H1 (cell line): ENCODE measurements at regions of chr2 and their contacts with region 1.

Region 1: GRCh38 chr2:211437396-211437795 is 881.0 kb downstream of the CPS1 start:
- DNase-seq: no peak
- H3K4me3 ChIP-seq: no peak overlapping the region
- H3K27ac ChIP-seq: no peak overlapping the region
- H3K4me1 ChIP-seq: peaks cover 0 to 4% (median 0%) of the 10 kb centered on the region in 4 experiments; a peak in 1 of 7 replicates
- H3K27me3 ChIP-seq: no peaks in the 10 kb centered on the region
- CTCF ChIP-seq: no peak
- EP300 ChIP-seq: no peak
- POLR2A ChIP-seq: no peak
- RAD21 ChIP-seq: no peak

Region 2: GRCh38 chr2:211376410-211376809 is 61.0 kb before region 1 on chr2:
- CTCF ChIA-PET with region 1: no interaction called
- POLR2A ChIA-PET with region 1: no interaction called
- DNase-seq: no peak
- H3K4me3 ChIP-seq: no peak overlapping the region
- H3K27ac ChIP-seq: no peak overlapping the region
- H3K4me1 ChIP-seq: no peaks in the 10 kb centered on the region
- H3K27me3 ChIP-seq: no peaks in the 10 kb centered on the region
- CTCF ChIP-seq: no peak
- EP300 ChIP-seq: no peak
- POLR2A ChIP-seq: no peak
- RAD21 ChIP-seq: no peak

Region 3: GRCh38 chr2:211416373-211416772 is 21.0 kb before region 1 on chr2:
- CTCF ChIA-PET with region 1: no interaction called
- POLR2A ChIA-PET with region 1: no interaction called
- DNase-seq: no peak
- H3K4me3 ChIP-seq: no peak overlapping the region
- H3K27ac ChIP-seq: no peak overlapping the region
- H3K4me1 ChIP-seq: no peaks in the 10 kb centered on the region
- H3K27me3 ChIP-seq: no peaks in the 10 kb centered on the region
- CTCF ChIP-seq: no peak
- EP300 ChIP-seq: no peak
- POLR2A ChIP-seq: no peak
- RAD21 ChIP-seq: no peak

Region 4: DNA sequence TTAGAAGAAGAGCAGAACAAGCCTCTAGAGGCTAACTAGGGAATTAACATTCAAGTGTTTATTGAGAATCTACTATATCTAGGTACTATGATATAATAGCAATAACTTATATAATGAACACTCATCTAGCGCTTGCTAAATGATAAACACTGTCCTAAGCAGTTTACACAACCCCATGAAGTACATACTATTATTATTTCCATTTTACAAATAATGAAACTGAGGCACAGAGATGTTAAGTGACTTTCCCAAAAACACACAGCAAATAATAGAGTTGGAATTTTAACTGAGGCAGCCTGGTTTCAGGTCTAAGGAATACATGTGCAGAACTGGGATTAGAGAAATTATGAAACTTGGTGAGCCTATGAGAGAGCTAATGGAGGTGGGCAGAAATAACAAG is 12.4 kb after region 1 on chr2:
- CTCF ChIA-PET with region 1: interaction called, 18 read pairs
- POLR2A ChIA-PET with region 1: no interaction called
- DNase-seq: no peak
- H3K4me3 ChIP-seq: no peak overlapping the region
- H3K27ac ChIP-seq: no peak overlapping the region
- H3K4me1 ChIP-seq: no peaks in the 10 kb centered on the region
- H3K27me3 ChIP-seq: no peaks in the 10 kb centered on the region
- CTCF ChIP-seq: peak in 1 of 3 experiments; percentile 4; a peak in 1 of 4 replicates
- EP300 ChIP-seq: no peak
- POLR2A ChIP-seq: no peak
- RAD21 ChIP-seq: no peak

Region 5: DNA sequence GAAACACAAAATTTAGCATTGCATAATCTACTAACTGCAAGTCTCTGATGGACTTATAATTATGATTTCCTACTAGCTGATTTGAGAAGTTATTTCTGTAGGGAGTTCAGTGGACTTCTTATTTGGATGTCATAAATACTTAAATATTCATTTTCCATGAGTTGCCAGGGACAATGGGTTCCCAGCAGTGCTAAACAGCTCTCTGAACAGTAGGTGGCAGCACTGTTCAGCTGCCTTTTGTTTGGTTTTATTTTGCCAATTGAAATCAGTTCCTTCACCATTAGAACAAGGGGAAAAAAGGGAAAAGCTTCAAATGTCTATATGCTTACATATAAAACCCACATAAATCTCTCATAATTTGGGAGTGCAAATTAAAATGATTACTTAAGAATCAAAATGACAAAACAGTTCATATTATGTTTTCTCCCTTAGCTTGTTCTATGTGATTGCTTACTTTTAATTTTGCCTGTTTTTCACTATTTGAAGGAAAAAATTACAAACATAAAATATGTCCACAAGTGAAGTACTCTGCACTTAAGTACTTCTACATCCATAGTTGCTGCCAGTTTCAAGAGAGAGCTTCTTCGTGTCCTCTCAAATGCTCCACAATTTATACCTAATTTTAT is 17.9 kb after region 1 on chr2:
- CTCF ChIA-PET with region 1: interaction called, 18 read pairs
- POLR2A ChIA-PET with region 1: no interaction called
- DNase-seq: no peak
- H3K4me3 ChIP-seq: no peak overlapping the region
- H3K27ac ChIP-seq: no peak overlapping the region
- H3K4me1 ChIP-seq: no peaks in the 10 kb centered on the region
- H3K27me3 ChIP-seq: no peaks in the 10 kb centered on the region
- CTCF ChIP-seq: peak; percentile 46 to 84 (median 63); a peak in 3 of 4 replicates
- EP300 ChIP-seq: no peak
- POLR2A ChIP-seq: no peak
- RAD21 ChIP-seq: peak; percentile 69 to 73